ENCODE measurements at regions of chr2 and their contacts with region 1.

Region 1: GRCh38 chr2:112726497-112727190 is 5.8 kb downstream of the NT5DC4 start:
- DNase-seq: peak; percentile 82 to 95 (median 88)
- ATAC-seq: peak; percentile 82 to 95 (median 92)
- H3K4me3 ChIP-seq: no peak overlapping the region
- H3K27ac ChIP-seq: no peak overlapping the region
- H3K4me1 ChIP-seq: peaks cover 0 to 20% (median 1%) of the 10 kb centered on the region in 12 donors
- H3K27me3 ChIP-seq: peaks cover 0 to 16% (median 0%) of the 10 kb centered on the region in 9 donors
- CTCF ChIP-seq: peak; percentile 86 to 99 (median 96)
- POLR2A ChIP-seq: no peak

Region 2: GRCh38 chr2:112597537-112598322 is 128.9 kb before region 1 on chr2:
- intact Hi-C with region 1: loop called (anchors 1 to 5 kb)
- DNase-seq: peak in 1 of 5 donors; percentile 1
- ATAC-seq: no peak
- H3K4me3 ChIP-seq: no peak overlapping the region
- H3K27ac ChIP-seq: no peak overlapping the region
- H3K4me1 ChIP-seq: peaks cover 0 to 14% (median 3%) of the 10 kb centered on the region in 12 donors
- H3K27me3 ChIP-seq: no peaks in the 10 kb centered on the region
- CTCF ChIP-seq: no peak
- POLR2A ChIP-seq: no peak

Region 3: DNA sequence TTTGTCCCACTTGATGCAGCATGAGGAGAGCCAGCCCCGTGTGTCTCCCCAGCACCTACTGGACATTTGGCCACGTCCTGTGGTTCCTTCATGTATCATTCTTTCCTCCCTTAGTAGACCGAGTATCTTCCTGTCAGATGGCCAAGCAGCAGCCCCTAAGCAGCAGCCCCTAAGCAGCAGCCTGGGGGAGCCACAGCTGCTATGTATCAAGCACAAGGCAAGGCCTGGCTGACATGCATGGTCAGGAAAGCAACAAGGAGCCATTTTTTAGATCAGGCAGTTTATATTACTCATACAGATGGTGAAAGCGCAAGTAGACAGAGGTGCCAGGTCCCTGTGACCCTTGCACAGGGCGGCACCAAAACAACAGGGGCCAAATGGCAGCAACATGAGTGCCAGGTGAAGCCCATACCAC is 120.1 kb before region 1 on chr2:
- intact Hi-C with region 1: loop called in 5 of 10 experiments (anchors 2 to 5 kb)
- DNase-seq: no peak
- ATAC-seq: no peak
- H3K4me3 ChIP-seq: no peak overlapping the region
- H3K27ac ChIP-seq: no peak overlapping the region
- H3K4me1 ChIP-seq: no peaks in the 10 kb centered on the region
- H3K27me3 ChIP-seq: no peaks in the 10 kb centered on the region
- CTCF ChIP-seq: no peak
- POLR2A ChIP-seq: no peak

Region 4: GRCh38 chr2:112626604-112627059 is 100.0 kb before region 1 on chr2:
- intact Hi-C with region 1: loop called in 9 of 10 experiments (anchors 1 to 5 kb)
- DNase-seq: peak; percentile 57 to 82 (median 62)
- ATAC-seq: peak; percentile 69 to 79 (median 74)
- H3K4me3 ChIP-seq: peak overlapping the region in 4 of 12 donors; percentile 10 to 34 (median 12)
- H3K27ac ChIP-seq: peak overlapping the region in 11 of 12 donors; percentile 56 to 87 (median 77)
- H3K4me1 ChIP-seq: peaks cover 0 to 79% (median 26%) of the 10 kb centered on the region in 12 donors
- H3K27me3 ChIP-seq: no peaks in the 10 kb centered on the region
- CTCF ChIP-seq: peak; percentile 70 to 91 (median 85)
- POLR2A ChIP-seq: no peak

Region 5: GRCh38 chr2:112685271-112685884 is 41.3 kb before region 1 on chr2:
- intact Hi-C with region 1: no loop called
- DNase-seq: no peak
- ATAC-seq: no peak
- H3K4me3 ChIP-seq: no peak overlapping the region
- H3K27ac ChIP-seq: no peak overlapping the region
- H3K4me1 ChIP-seq: peaks cover 0 to 31% (median 0%) of the 10 kb centered on the region in 12 donors
- H3K27me3 ChIP-seq: no peaks in the 10 kb centered on the region
- CTCF ChIP-seq: peak in 1 of 12 donors; percentile 14
- POLR2A ChIP-seq: no peak

Measured in heart left ventricle (tissue), 16 donors.